CD4-positive, alpha-beta T cell (primary cell): ENCODE measurements at regions of chr12 and their contacts with region 1.

Region 1: DNA sequence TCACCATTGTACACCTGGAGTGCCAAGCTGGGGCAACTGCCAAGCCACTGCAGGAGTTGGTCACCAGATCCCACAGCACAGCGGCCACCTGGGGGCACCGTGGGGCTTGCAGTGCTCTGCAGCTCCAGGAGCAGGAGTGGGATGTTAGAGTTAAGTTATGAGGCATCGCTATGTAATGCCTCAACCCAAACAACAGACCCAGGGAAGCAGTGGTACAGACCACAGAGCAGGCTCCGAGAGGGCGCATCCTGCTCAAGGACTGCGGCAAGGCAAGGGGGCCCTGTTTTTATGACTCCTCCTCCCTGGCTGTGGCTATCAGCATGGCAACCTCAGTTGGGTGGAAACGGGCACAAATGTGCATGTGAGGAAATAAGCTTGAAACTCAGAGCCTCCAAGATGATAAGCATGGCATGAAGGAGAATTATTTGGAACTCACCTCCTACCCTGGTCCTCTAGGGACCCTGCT is 63.1 kb downstream of the ARL6IP4 start:
- DNase-seq: peak; percentile 44 to 84 (median 68)
- ATAC-seq: peak; percentile 97
- H3K4me3 ChIP-seq: no peak overlapping the region
- H3K4me3 Mint-ChIP-seq: peak overlapping the region; percentile 42
- H3K27ac ChIP-seq: no peak overlapping the region
- H3K27ac Mint-ChIP-seq: peak overlapping the region; percentile 80
- H3K4me1 ChIP-seq: peaks cover 21% of the 10 kb centered on the region
- H3K4me1 Mint-ChIP-seq: peaks cover 27% of the 10 kb centered on the region
- H3K27me3 ChIP-seq: no peaks in the 10 kb centered on the region
- H3K27me3 Mint-ChIP-seq: no peaks in the 10 kb centered on the region
- CTCF ChIP-seq: peak; percentile 58

Region 2: DNA sequence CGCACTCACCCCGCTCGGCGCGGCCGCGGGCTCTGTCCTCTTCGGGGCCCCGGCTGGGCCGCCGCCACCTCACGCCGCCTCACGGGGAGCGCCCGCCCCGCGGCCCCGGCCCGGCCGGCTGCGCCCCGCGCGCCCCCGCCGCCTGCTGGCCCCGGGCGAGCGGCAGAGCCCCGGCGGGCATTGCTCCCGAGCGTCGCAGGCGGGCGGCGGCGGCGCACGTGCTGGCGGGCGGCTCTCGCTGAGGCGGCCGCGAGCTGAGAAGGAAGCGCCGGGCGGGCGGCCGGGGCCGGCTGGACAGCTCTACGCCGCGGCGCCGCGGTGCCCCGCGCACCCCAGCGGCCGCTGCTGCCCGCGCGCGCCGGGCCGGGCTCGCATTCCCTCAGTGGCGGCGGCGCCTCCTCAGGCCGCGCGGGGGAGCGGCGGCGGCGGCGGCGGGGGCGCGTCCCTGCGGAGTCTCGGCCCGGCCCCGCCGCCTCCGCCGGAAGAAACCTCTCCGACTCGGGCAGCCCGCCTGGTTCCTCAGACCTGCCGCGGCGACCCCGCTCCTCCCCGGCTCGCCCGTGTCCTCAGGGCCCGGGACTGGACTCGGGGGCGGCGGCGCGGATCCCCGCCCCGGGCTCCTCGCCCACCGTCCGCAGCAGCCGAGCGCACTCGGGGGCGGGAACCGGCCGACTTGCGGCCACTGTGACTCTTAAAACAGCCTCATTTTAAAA is 107.3 kb after region 1 on chr12 and contains the start of gene PITPNM2:
- CTCF ChIA-PET with region 1: interaction called, 5 read pairs
- POLR2A ChIA-PET with region 1: interaction called, 11 read pairs
- intact Hi-C with region 1: loop called (anchors 2 kb)
- DNase-seq: peak; percentile 28 to 87 (median 60)
- ATAC-seq: peak; percentile 86
- H3K4me3 ChIP-seq: peak within 1 kb of the TSS; percentile 76
- H3K4me3 Mint-ChIP-seq: peak within 1 kb of the TSS; percentile 93
- H3K27ac ChIP-seq: peak within 1 kb of the TSS; percentile 22 to 40
- H3K27ac Mint-ChIP-seq: peak within 1 kb of the TSS; percentile 89
- H3K4me1 ChIP-seq: peaks cover 27% of the 10 kb centered on the region
- H3K4me1 Mint-ChIP-seq: peaks cover 52% of the 10 kb centered on the region
- H3K27me3 ChIP-seq: no peaks in the 10 kb centered on the region
- H3K27me3 Mint-ChIP-seq: no peaks in the 10 kb centered on the region
- CTCF ChIP-seq: no peak
- total RNA-seq, gene PITPNM2: 37.3 to 38.3 TPM

Region 3: DNA sequence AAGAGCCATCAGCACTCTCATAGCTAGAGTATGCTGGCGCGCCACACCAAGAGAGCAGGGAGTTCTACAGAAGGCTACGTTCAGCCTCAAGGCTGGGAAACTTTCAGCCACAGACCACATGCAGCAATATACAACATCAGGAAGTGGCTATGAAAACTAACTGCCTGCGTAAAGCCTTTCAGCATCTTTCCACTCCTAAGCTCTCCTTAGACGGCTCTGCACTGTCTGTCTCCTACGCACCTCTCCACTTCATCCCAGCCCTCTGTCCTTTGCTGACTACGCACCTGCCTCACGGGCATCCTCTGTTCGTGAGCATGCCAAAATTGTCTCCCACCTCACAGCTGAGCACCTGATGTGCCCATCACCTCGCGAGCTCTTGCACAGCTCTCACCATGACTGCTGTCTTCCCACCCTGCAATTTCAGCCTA is 179.7 kb after region 1 on chr12:
- CTCF ChIA-PET with region 1: interaction called, 10 read pairs
- POLR2A ChIA-PET with region 1: interaction called, 3 read pairs
- intact Hi-C with region 1: no loop called
- DNase-seq: peak; percentile 26 to 85 (median 41)
- ATAC-seq: peak; percentile 94
- H3K4me3 ChIP-seq: peak overlapping the region; percentile 41
- H3K4me3 Mint-ChIP-seq: peak overlapping the region; percentile 78
- H3K27ac ChIP-seq: peak overlapping the region; percentile 53 to 75
- H3K27ac Mint-ChIP-seq: peak overlapping the region; percentile 92
- H3K4me1 ChIP-seq: peaks cover 28% of the 10 kb centered on the region
- H3K4me1 Mint-ChIP-seq: peaks cover 36% of the 10 kb centered on the region
- H3K27me3 ChIP-seq: no peaks in the 10 kb centered on the region
- H3K27me3 Mint-ChIP-seq: no peaks in the 10 kb centered on the region
- CTCF ChIP-seq: no peak

Region 4: GRCh38 chr12:123614531-123614930 is 571.0 kb after region 1 on chr12:
- CTCF ChIA-PET with region 1: no interaction called
- POLR2A ChIA-PET with region 1: no interaction called
- intact Hi-C with region 1: loop called in 1 of 2 experiments (anchors 10 kb)
- DNase-seq: no peak
- ATAC-seq: no peak
- H3K4me3 ChIP-seq: no peak overlapping the region
- H3K4me3 Mint-ChIP-seq: no peak overlapping the region
- H3K27ac ChIP-seq: no peak overlapping the region
- H3K27ac Mint-ChIP-seq: no peak overlapping the region
- H3K4me1 ChIP-seq: no peaks in the 10 kb centered on the region
- H3K4me1 Mint-ChIP-seq: peaks cover 4% of the 10 kb centered on the region
- H3K27me3 ChIP-seq: no peaks in the 10 kb centered on the region
- H3K27me3 Mint-ChIP-seq: no peaks in the 10 kb centered on the region
- CTCF ChIP-seq: no peak